Adrenal gland (tissue), 19 donors: ENCODE measurements at regions of chr7 and their contacts with region 1.

Region 1: DNA sequence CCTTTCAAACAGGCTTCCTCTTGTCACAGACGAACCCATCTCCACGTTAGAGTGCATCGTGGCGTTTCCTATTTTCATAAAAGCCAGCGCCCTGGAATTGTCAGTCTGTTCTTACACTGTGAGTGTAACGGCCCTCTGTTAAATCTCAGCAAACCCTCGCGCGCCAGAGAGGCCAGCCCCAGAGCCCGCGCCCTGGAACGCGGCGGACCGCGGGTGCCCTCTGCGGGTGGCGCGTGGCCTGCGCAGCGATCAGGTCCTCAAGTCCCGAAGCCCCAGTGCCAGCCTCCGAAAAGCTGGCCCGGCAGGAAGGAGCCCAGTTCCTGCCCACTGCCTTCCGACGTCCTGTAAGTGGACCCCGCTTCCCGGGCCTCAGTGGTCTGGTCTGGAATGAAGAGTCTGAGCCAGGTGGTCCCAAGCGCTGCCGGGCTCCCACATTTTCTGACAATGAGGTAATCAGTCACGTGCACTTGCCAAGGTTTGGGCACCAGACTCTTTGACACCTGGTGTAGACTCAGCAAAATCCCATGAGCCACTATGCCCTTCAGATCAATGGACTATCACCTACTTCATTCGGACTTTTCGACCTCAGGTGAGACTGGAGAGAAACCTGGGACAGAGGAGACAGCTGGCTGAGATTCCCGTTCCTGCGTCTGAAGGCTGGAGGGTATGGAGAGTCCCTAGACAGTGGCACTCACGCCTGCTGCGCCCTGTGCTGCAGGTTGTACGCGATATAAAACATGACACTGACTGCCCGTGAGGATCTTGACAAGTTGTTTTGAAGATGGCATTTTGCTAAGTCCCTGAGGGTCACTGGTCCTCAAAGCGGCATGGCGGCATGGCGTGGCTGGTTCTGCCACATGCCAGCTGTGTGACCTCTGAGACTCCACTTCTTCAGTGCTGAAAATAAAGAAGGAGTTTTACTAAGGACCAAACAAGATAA is 109.4 kb upstream of the LANCL2 start:
- DNase-seq: peak; percentile 76 to 92 (median 89)
- H3K4me3 ChIP-seq: peak overlapping the region in 2 of 4 donors; percentile 44 to 61
- H3K27ac ChIP-seq: peak overlapping the region in 1 of 5 donors; percentile 21
- H3K4me1 ChIP-seq: peaks cover 0 to 10% of the 10 kb centered on the region in 2 donors
- H3K27me3 ChIP-seq: no peaks in the 10 kb centered on the region
- CTCF ChIP-seq: peak; percentile 80 to 95 (median 83)
- POLR2A ChIP-seq: no peak

Region 2: GRCh38 chr7:54773472-54774399 is 482.0 kb before region 1 on chr7:
- intact Hi-C with region 1: loop called (anchors 2 kb)
- DNase-seq: peak; percentile 80 to 93 (median 87)
- H3K4me3 ChIP-seq: peak overlapping the region in 1 of 4 donors; percentile 60
- H3K27ac ChIP-seq: no peak overlapping the region
- H3K4me1 ChIP-seq: peaks cover 0 to 8% of the 10 kb centered on the region in 2 donors
- H3K27me3 ChIP-seq: peaks cover 6% of the 10 kb centered on the region
- CTCF ChIP-seq: peak; percentile 60 to 92 (median 88)
- POLR2A ChIP-seq: no peak

Region 3: DNA sequence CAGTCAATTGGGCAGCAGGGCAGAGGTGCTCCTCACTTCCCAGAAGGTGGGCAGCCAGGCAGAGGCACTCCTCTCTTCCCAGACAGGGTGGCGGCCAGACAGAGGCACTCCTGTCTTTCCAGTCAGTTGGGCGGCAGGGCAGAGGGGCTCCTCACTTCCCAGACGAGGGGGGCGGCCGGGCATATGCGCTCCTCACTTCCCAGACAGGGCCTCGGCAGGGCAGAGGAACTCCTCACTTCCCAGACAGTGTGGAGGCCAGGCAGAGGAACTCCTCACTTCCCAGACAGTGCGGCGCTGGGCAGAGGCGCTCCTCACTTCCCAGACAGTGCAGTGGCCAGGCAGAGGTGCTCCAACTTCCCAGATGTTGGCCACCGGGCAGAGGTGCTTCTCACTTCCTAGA is 463.4 kb before region 1 on chr7:
- intact Hi-C with region 1: loop called in 1 of 2 experiments (anchors 5 kb)
- DNase-seq: no peak
- H3K4me3 ChIP-seq: no peak overlapping the region
- H3K27ac ChIP-seq: no peak overlapping the region
- H3K4me1 ChIP-seq: peaks cover 5 to 6% of the 10 kb centered on the region in 2 donors
- H3K27me3 ChIP-seq: no peaks in the 10 kb centered on the region
- CTCF ChIP-seq: no peak
- POLR2A ChIP-seq: no peak